Transverse colon (tissue), 4 donors: ENCODE measurements at regions of chr6 and their contacts with region 1.

Region 1: DNA sequence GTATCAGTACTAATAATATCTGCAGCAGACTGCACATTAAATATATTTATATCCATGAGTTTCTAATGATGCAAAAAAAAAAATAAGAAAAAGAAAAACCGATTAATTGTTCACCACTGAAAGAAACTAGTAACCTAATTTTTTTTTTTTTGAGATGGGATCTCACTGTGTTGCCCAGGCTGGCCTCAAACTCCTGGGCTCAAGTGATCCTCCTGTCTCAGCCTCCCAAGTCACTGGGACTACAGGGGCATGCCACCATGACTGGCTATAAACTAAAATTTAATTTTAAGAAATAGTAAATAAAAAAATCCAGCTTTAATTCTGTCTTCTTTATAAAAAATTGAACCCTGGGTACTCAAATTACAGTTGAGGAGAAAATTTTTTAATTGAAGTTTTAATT is 358.2 kb downstream of the QKI start:
- DNase-seq: no peak
- H3K4me3 ChIP-seq: no peak overlapping the region
- H3K27ac ChIP-seq: no peak overlapping the region
- H3K4me1 ChIP-seq: no peaks in the 10 kb centered on the region
- H3K27me3 ChIP-seq: no peaks in the 10 kb centered on the region
- CTCF ChIP-seq: no peak
- EP300 ChIP-seq: no peak
- POLR2A ChIP-seq: no peak

Region 2: DNA sequence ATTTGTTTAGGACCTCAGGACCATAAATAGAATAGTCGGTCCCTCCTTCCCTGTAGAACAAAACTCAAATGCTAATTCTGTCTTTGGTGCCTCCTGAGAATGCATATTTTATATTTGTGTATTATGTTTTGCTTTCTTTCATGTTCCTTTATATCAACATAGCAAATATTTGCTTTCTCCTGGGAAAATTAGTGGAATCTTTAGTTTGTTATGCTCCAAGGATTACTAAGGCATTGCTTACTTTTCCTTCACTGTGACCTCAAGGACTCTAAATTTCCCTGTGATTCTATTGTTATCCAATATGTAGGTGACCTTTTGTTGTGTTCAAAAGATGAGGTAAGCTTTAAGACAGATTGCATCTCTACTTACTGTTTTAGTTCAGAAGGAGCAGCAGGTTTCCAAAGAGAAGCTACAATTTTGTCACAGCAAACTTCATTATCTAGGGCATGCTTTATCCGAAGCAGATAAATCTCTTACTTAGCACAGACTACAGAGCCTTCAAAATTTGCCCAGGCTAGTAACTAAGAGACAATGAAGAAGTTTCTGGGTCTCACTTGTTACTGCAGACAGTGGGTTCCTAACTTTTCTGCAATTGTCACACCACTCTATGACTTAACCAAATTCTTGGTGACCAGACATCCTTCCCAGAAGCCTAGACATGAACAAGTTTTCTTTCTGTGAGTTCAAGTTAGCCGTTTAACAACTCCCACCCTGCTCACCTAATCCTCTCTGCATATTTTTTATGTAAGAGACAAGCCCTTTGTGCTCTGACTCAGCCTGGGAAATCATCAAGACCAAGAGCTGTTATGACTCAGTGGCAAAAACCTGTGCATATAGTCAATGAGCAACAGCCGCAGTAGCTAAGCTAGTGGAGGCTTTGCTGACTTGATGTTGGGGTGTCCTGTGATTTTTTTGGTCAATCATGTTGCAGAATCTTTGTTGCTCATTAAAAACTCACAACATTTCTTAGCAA is 20.6 kb after region 1 on chr6:
- in situ Hi-C with region 1: no loop called
- intact Hi-C with region 1: loop called (anchors 1 kb)
- DNase-seq: no peak
- H3K4me3 ChIP-seq: no peak overlapping the region
- H3K27ac ChIP-seq: no peak overlapping the region
- H3K4me1 ChIP-seq: no peaks in the 10 kb centered on the region
- H3K27me3 ChIP-seq: no peaks in the 10 kb centered on the region
- CTCF ChIP-seq: no peak
- EP300 ChIP-seq: no peak
- POLR2A ChIP-seq: no peak